ENCODE measurements at regions of chr17 and their contacts with region 1.

Region 1: GRCh38 chr17:59331129-59331928 is at the start of gene YPEL2:
- DNase-seq: peak; percentile 100
- H3K4me3 ChIP-seq: peak within 1 kb of the TSS; percentile 78 to 91
- H3K27ac ChIP-seq: peak within 1 kb of the TSS; percentile 58 to 88; a peak in 3 of 4 replicates
- H3K4me1 ChIP-seq: peaks cover 20 to 54% of the 10 kb centered on the region in 2 experiments
- H3K27me3 ChIP-seq: no peaks in the 10 kb centered on the region
- CTCF ChIP-seq: no peak
- EP300 ChIP-seq: peak in 1 of 2 experiments; percentile 79; a peak in 2 of 4 replicates
- RAD21 ChIP-seq: no peak
- polyA plus RNA-seq, gene YPEL2: 3.2 and 5.5 TPM in 2 replicates

Region 2: DNA sequence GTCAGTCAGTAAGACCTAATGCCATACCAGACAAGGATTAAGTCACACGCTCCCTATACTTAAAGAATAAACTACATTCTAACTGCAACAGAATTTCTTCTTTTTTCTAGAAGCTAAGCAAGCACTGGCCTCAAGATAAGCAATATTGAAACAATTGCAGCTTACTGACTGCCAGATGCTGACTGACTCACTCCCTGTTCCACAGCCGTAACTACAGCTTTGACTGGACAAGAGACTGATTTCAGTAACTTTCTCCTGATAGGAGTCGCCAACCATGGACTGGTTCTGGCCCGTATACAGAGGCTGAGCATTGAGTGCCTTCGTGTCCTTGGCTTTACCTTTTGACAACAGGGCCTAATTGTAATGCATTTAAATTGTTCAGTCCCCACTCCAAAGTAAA is 292.6 kb before region 1 on chr17:
- CTCF ChIA-PET with region 1: no interaction called
- POLR2A ChIA-PET with region 1: no interaction called
- DNase-seq: no peak
- H3K4me3 ChIP-seq: no peak overlapping the region
- H3K27ac ChIP-seq: no peak overlapping the region
- H3K4me1 ChIP-seq: no peaks in the 10 kb centered on the region
- H3K27me3 ChIP-seq: no peaks in the 10 kb centered on the region
- CTCF ChIP-seq: no peak
- EP300 ChIP-seq: no peak
- RAD21 ChIP-seq: no peak

Region 3: GRCh38 chr17:59234631-59235030 is 96.7 kb before region 1 on chr17:
- CTCF ChIA-PET with region 1: no interaction called
- POLR2A ChIA-PET with region 1: no interaction called
- DNase-seq: no peak
- H3K4me3 ChIP-seq: no peak overlapping the region
- H3K27ac ChIP-seq: no peak overlapping the region
- H3K4me1 ChIP-seq: no peaks in the 10 kb centered on the region
- H3K27me3 ChIP-seq: no peaks in the 10 kb centered on the region
- CTCF ChIP-seq: no peak
- EP300 ChIP-seq: no peak
- RAD21 ChIP-seq: no peak

Region 4: DNA sequence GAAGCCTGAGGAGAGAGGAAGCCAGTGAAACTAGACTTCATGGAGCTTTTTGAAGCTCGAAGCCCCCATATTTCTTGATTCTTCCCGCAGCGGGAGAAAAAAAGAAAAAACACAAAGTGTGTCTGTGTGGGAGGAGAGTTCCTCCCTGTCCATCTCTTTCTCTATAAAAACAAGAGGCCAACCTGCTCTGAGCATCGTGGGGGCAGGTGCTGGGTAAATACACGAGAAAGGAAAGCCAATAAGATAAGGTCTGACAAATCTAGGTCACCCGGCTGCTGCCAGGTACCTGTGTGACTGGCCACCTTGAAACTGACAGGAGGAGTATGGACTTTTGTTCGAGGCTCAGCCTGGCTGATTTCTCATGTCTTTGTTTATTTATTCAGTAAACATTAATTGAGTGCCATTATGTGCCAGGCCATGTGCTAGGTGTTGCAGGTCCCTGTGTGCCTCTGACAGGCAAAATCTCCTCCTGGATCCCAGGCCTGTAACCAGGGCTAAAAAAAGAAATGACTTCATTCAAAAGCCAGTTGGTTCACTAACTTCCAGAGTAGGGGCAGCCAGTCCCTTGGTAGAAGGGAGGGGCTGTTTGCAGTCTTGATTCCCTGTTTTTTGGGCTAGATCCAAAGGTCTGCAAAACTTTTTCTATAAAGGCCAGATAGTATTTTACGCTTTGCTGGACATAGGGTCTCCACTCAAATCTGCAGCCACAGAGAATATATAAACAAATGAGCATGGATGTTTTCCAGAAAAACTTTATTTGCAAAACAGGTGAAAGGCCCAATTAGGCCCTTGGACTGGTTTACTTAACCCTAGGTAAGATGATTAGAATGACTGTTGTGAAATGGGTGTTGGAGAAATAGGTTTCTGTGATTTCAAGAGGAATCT is 35.7 kb after region 1 on chr17:
- CTCF ChIA-PET with region 1: interaction called, 11 read pairs
- POLR2A ChIA-PET with region 1: no interaction called
- DNase-seq: no peak
- H3K4me3 ChIP-seq: no peak overlapping the region
- H3K27ac ChIP-seq: peak overlapping the region; percentile 55 to 62
- H3K4me1 ChIP-seq: peaks cover 45 to 57% of the 10 kb centered on the region in 2 experiments
- H3K27me3 ChIP-seq: no peaks in the 10 kb centered on the region
- CTCF ChIP-seq: no peak
- EP300 ChIP-seq: peak in 1 of 2 experiments; percentile 27; a peak in 1 of 4 replicates
- RAD21 ChIP-seq: no peak; the same call in 1 of the 2 replicates

Region 5: DNA sequence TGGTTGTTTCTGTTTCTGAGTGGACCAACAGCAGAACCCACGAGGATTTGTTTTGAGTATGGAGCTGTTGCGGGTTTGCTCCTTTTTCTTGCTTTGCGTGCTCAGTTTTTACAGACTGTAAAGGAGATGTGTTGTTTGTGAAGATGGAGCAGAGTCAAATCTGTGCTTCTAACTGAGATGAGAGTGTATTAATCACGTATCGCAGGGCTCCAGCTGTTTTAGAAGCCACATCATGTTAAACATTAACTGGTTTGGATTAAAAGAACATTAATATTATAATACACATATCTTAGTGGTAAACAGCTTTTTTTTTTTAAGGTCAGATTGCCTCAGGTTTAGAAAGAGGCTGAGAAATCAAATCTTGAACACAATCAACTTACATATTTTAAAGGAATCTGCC is 69.5 kb after region 1 on chr17:
- CTCF ChIA-PET with region 1: interaction called, 30 read pairs
- POLR2A ChIA-PET with region 1: no interaction called
- DNase-seq: no peak
- H3K4me3 ChIP-seq: no peak overlapping the region
- H3K27ac ChIP-seq: peak overlapping the region; percentile 9 to 91; a peak in 2 of 4 replicates
- H3K4me1 ChIP-seq: peaks cover under 1 to 38% of the 10 kb centered on the region in 2 experiments; a peak in 2 of 4 replicates
- H3K27me3 ChIP-seq: no peaks in the 10 kb centered on the region
- CTCF ChIP-seq: no peak
- EP300 ChIP-seq: no peak
- RAD21 ChIP-seq: no peak; the same call in 1 of the 2 replicates

Region 6: DNA sequence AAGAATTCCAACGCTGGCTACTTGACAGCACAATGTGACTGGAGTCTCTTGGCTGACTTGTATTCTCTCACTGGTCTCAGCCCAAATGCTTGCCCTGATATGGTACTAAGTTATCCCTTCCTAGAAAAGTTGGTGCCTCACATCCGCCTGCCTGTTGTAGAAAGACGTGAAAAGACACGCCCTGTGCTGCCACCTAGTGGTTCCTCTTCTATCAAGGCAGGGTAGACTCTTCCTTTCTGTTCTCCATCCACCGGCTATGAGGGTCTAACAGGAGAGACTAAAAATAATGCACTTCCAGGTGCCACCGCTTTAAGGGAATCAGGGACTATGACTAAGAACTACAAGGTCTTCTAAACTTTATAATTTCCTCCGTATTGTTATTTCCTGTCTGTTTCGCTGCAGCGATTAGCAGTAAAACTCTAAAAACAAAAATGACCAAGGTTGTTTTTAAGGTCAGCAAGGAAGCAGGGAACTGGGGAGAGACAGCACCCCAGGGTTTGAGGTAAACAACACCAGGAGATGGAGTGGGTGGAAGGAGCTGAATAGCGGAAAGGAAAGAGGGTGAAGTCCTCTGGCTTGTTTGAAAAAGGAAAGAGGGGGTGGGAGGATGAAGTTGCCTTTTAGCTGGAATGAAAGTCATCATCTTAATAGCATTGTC is 109.6 kb after region 1 on chr17:
- CTCF ChIA-PET with region 1: interaction called, 569 read pairs
- POLR2A ChIA-PET with region 1: interaction called, 5 read pairs
- DNase-seq: peak; percentile 82
- H3K4me3 ChIP-seq: no peak overlapping the region
- H3K27ac ChIP-seq: no peak overlapping the region
- H3K4me1 ChIP-seq: peaks cover 0 to 4% of the 10 kb centered on the region in 2 experiments; a peak in 1 of 4 replicates
- H3K27me3 ChIP-seq: no peaks in the 10 kb centered on the region
- CTCF ChIP-seq: peak; percentile 99
- EP300 ChIP-seq: no peak
- RAD21 ChIP-seq: peak; percentile 100

Region 7: GRCh38 chr17:59558977-59559376 is 227.6 kb after region 1 on chr17:
- CTCF ChIA-PET with region 1: interaction called, 31 read pairs
- POLR2A ChIA-PET with region 1: no interaction called
- DNase-seq: peak; percentile 42
- H3K4me3 ChIP-seq: no peak overlapping the region
- H3K27ac ChIP-seq: no peak overlapping the region
- H3K4me1 ChIP-seq: no peaks in the 10 kb centered on the region
- H3K27me3 ChIP-seq: no peaks in the 10 kb centered on the region
- CTCF ChIP-seq: peak; percentile 69
- EP300 ChIP-seq: no peak
- RAD21 ChIP-seq: peak; percentile 86

Measured in SK-N-SH (cell line).